BJ (cell line): ENCODE measurements at regions of chr10 and their contacts with region 1.

Region 1: GRCh38 chr10:12271210-12271540 is 75.2 kb downstream of the CDC123 start:
- DNase-seq: no peak
- H3K4me3 ChIP-seq: no peak overlapping the region
- H3K27me3 ChIP-seq: no peaks in the 10 kb centered on the region
- CTCF ChIP-seq: no peak

Region 2: GRCh38 chr10:12177642-12178041 is 93.5 kb before region 1 on chr10:
- CTCF ChIA-PET with region 1: no interaction called
- POLR2A ChIA-PET with region 1: no interaction called
- DNase-seq: no peak
- H3K4me3 ChIP-seq: no peak overlapping the region
- H3K27me3 ChIP-seq: no peaks in the 10 kb centered on the region
- CTCF ChIP-seq: no peak

Region 3: DNA sequence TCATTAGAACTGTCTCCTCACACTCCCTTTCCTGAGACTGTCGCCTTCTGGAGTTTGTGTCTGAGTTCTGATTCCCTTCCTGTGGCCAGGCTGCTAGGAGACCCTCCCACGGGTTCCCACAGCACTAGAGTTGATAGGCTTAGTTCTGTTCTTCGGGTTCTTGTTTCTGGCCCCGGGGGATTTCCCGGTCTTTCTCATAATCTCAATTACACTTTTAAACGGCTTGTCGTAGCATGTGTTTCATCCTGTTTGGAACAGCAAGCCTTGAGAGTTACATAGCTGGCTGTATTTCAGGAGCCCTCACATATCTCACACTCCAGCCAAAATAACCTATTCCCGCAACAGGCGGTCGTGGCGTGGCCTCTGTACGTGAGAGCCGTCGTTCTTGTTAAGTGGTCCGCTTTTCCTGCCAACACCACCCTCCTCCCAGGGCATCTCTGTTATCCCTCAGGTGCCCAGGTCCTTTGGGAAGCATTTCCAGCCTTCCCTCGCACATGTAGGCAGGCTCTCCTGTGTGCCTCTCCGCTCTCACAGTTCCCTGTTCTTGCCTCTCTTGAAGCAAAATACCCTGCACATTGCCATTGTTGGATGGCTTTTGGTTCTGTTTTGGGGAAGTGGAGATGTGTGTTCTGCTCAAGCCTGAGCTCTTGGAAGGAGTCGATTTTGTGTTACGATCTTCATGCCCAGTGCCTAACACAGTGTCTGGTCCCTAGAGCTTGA is 29.2 kb before region 1 on chr10:
- CTCF ChIA-PET with region 1: no interaction called
- POLR2A ChIA-PET with region 1: no interaction called
- DNase-seq: no peak
- H3K4me3 ChIP-seq: no peak overlapping the region
- H3K27me3 ChIP-seq: no peaks in the 10 kb centered on the region
- CTCF ChIP-seq: no peak

Region 4: DNA sequence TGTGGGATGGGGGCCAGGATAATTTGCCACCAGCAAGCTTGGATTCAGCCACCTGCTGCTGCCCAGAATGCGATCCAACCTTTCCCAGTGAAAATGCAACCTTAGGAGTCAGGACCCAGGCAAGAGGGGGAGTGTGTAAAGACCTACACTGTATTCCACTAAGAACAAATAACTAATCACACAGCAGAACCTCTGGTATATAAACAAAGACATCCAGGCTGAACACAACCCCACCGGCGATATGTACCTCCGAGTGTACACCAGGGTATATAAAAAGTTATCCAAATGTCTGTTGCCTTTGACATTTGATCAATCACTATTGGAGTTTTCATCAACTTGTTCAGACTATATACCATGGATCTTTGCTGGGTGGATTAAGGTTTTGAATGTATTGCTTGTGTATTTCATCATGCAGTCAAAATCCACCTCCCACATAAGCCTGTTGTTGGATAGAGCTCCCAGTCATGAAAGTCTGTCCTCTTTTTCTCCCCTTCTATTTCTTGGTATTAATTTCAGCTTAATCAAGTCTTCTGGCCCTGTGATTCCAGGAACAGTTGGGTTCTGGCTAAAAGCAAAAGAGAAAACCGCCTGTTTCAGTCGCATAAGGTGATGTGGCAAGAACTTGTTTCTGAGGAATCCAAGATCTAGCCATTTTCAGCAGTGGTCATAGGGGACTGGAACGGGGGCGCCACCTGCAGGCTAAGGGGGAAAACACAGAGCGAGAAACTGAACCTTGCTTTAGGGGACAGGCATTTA is 439.6 kb after region 1 on chr10:
- CTCF ChIA-PET with region 1: interaction called, 92 read pairs
- POLR2A ChIA-PET with region 1: no interaction called
- DNase-seq: peak; percentile 46
- H3K4me3 ChIP-seq: no peak overlapping the region
- H3K27me3 ChIP-seq: no peaks in the 10 kb centered on the region; the same call in none of the 2 replicates
- CTCF ChIP-seq: peak; percentile 96

Region 5: GRCh38 chr10:13106387-13107045 is 835.3 kb after region 1 on chr10:
- CTCF ChIA-PET with region 1: no interaction called
- POLR2A ChIA-PET with region 1: interaction called, 23 read pairs
- DNase-seq: no peak
- H3K4me3 ChIP-seq: no peak overlapping the region
- H3K27me3 ChIP-seq: no peaks in the 10 kb centered on the region
- CTCF ChIP-seq: no peak